Pancreas (tissue), 10 donors: ENCODE measurements at regions of chr7 and their contacts with region 1.

Region 1: GRCh38 chr7:145050415-145050814 is 214.6 kb upstream of the TPK1 start:
- DNase-seq: no peak
- ATAC-seq: no peak
- H3K4me3 ChIP-seq: no peak overlapping the region
- H3K27ac ChIP-seq: no peak overlapping the region
- H3K4me1 ChIP-seq: no peaks in the 10 kb centered on the region
- H3K27me3 ChIP-seq: no peaks in the 10 kb centered on the region
- CTCF ChIP-seq: no peak

Region 2: GRCh38 chr7:145104400-145104799 is 54.0 kb after region 1 on chr7:
- intact Hi-C with region 1: loop called in 1 of 3 experiments (anchors 5 kb)
- DNase-seq: no peak
- ATAC-seq: no peak
- H3K4me3 ChIP-seq: no peak overlapping the region
- H3K27ac ChIP-seq: no peak overlapping the region
- H3K4me1 ChIP-seq: no peaks in the 10 kb centered on the region
- H3K27me3 ChIP-seq: no peaks in the 10 kb centered on the region
- CTCF ChIP-seq: no peak